Aorta (tissue), 5 donors: ENCODE measurements at regions of chr12 and their contacts with region 1.

Region 1: DNA sequence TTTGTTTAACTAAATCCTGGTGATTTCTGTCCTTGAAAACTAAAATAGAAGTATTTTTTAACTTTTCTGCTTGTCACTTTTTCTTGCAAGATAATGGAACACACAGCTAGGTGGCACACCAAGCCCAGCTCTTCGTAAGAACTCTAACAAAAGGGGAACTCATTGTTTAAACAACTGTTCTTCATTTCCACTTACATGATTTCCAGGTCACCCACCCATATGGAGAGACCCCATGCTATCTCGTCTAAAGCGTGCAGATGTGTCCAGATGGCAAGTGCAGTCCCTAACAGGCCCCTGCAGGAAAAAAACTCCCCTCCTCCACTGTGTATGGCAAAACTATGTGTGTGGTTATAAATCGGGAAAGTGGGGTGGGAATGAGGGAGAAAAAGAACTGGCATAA is 43.3 kb upstream of the NT5DC3 start:
- DNase-seq: no peak
- ATAC-seq: no peak
- H3K4me3 ChIP-seq: no peak overlapping the region
- H3K27ac ChIP-seq: no peak overlapping the region
- H3K4me1 ChIP-seq: no peaks in the 10 kb centered on the region
- H3K27me3 ChIP-seq: no peaks in the 10 kb centered on the region

Region 2: DNA sequence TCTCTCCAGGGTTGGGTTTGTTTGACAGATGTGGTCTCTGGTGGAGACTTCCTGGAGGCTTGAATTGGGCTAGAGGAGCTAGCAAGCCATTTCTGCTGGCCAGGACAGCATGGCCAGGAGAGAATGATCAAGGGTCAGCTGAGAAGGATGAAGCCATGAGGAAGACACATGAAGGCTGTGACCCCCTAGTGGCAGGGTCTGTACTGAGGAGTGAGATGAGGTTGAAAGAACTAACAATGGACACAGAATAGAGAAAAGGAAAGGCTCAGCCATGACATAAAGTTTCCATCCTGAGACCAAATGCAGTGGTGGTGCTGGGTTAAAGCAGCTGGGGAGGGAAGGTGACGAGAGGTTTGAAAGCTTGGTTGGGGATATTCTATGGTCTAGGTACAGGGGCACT is 133.1 kb before region 1 on chr12:
- intact Hi-C with region 1: no loop called
- DNase-seq: no peak
- ATAC-seq: no peak
- H3K4me3 ChIP-seq: no peak overlapping the region
- H3K27ac ChIP-seq: no peak overlapping the region
- H3K4me1 ChIP-seq: no peaks in the 10 kb centered on the region
- H3K27me3 ChIP-seq: no peaks in the 10 kb centered on the region

Region 3: GRCh38 chr12:103930034-103930786 is 45.9 kb after region 1 on chr12 and contains the start of gene HSP90B1:
- intact Hi-C with region 1: loop called (anchors 5 to 10 kb)
- DNase-seq: peak; percentile 99 to 100
- ATAC-seq: peak; percentile 96
- H3K4me3 ChIP-seq: peak within 1 kb of the TSS; percentile 78 to 80
- H3K27ac ChIP-seq: peak within 1 kb of the TSS; percentile 68 to 97
- H3K4me1 ChIP-seq: peaks cover 0 to 6% of the 10 kb centered on the region in 2 donors
- H3K27me3 ChIP-seq: no peaks in the 10 kb centered on the region
- total RNA-seq, gene HSP90B1: 641 to 818 TPM